ENCODE measurements at regions of chr1 and their contacts with region 1.

Region 1: GRCh38 chr1:81183051-81183450 is 617.7 kb upstream of the ADGRL2 start:
- DNase-seq: no peak
- H3K4me3 Mint-ChIP-seq: no peak overlapping the region
- H3K27ac Mint-ChIP-seq: no peak overlapping the region
- H3K4me1 Mint-ChIP-seq: no peaks in the 10 kb centered on the region
- H3K27me3 Mint-ChIP-seq: no peaks in the 10 kb centered on the region

Region 2: DNA sequence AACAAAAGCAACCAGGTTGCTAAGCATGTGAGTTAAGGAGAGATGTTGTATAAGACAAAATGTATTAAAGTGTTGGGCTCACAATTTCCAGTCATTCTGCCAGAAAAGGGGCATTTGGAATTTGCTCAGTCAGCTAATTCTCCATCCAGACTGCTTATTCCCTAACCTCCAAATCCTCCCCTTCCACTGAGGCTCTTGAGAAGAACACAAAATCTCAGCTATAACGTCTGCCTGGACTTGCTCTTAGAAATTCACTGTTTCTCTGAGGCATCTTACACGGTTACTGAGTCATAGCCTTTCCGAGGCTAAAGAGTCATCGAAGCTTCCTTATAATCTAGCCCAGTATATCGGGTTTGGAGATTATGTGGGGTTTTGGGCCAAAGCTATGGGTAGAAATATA is 1628.4 kb before region 1 on chr1:
- CTCF ChIA-PET with region 1: no interaction called
- intact Hi-C with region 1: loop called (anchors 5 kb)
- DNase-seq: no peak
- H3K4me3 Mint-ChIP-seq: no peak overlapping the region
- H3K27ac Mint-ChIP-seq: no peak overlapping the region
- H3K4me1 Mint-ChIP-seq: no peaks in the 10 kb centered on the region
- H3K27me3 Mint-ChIP-seq: no peaks in the 10 kb centered on the region

Region 3: DNA sequence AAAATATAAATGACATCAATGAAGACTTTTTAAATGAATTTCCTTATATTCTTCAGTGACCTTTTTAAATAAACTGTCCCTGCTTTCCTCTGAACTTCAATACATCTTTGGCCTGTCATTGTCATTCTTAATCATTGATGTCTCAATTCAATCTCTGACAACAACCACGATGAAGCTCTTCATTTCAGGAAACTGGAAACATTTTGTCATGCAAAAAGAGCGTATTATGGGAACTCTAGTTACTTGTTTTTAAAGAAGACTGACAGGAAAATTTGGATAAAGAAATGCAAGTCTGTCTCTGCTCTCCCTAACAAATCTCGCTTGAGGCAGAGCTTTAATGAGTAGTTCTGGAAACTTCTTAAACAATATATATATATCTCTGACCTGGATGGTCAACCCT is 81.9 kb after region 1 on chr1:
- CTCF ChIA-PET with region 1: no interaction called
- intact Hi-C with region 1: no loop called
- DNase-seq: no peak
- H3K4me3 Mint-ChIP-seq: no peak overlapping the region
- H3K27ac Mint-ChIP-seq: no peak overlapping the region
- H3K4me1 Mint-ChIP-seq: no peaks in the 10 kb centered on the region
- H3K27me3 Mint-ChIP-seq: no peaks in the 10 kb centered on the region

Measured in activated naive CD4-positive, alpha-beta T cell treated with anti-CD3 and anti-CD28 coated beads for 36 hours (primary cell).